ENCODE measurements at regions of chr6 and their contacts with region 1.

Region 1: DNA sequence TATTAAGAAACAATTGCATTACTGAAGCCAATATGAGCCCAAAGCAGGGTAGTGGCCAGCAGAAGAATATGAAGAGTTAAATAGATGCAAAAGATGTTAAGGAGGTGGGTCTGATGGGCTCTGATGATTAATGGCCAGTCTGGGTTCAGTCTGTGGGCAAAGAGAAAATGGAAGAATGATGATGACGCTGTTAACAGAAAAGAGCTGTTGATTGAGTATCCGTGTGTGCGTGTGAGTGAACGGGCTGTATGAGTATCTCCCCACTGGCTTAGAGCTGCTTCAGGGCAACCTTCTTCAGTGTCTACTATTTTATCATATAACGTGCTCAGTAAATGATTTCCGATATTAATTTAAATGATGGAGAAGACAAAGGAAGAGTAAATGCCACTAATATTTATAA is 723.3 kb upstream of the MAP3K7 start:
- DNase-seq: no peak
- ATAC-seq: no peak
- H3K4me3 ChIP-seq: no peak overlapping the region
- H3K27ac ChIP-seq: no peak overlapping the region
- H3K4me1 ChIP-seq: no peaks in the 10 kb centered on the region
- H3K27me3 ChIP-seq: no peaks in the 10 kb centered on the region
- CTCF ChIP-seq: no peak

Region 2: DNA sequence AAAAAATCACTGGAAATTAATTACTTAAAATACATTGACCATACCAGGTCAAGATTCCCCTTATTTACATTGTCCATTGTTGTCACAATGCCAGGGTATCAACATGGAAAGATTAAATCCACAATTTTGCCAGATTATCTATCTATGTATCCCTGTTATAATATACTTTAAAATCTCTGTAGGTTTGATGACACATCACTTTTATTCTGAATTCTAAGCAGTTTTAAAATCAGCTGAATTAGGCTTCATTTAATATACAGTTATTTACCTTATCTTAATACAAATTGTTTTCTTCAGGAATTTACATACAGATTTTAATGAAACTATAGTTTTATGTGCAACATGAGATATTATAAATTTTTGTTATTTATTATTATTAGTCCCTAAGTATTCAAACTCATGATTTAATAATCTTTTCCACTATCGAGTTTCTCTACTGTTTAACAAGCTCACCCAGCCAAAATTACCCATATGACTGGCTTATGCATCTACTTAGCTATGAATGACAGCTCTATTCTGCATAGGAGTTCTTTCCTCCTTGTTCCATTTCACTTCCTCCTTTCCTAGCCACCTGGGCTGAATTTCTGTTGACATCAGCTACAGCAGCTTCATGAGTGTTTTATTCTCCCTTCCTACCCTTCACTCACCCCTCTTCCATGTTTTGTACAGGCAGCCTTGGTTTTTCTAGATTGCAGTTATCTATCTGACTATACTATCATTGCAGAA is 69.1 kb before region 1 on chr6:
- intact Hi-C with region 1: loop called in 1 of 10 experiments (anchors 2 kb)
- DNase-seq: no peak
- ATAC-seq: no peak
- H3K4me3 ChIP-seq: no peak overlapping the region
- H3K27ac ChIP-seq: no peak overlapping the region
- H3K4me1 ChIP-seq: no peaks in the 10 kb centered on the region
- H3K27me3 ChIP-seq: no peaks in the 10 kb centered on the region
- CTCF ChIP-seq: no peak

Region 3: GRCh38 chr6:91268941-91269340 is 41.2 kb before region 1 on chr6:
- intact Hi-C with region 1: no loop called
- DNase-seq: no peak
- ATAC-seq: no peak
- H3K4me3 ChIP-seq: no peak overlapping the region
- H3K27ac ChIP-seq: no peak overlapping the region
- H3K4me1 ChIP-seq: no peaks in the 10 kb centered on the region
- H3K27me3 ChIP-seq: no peaks in the 10 kb centered on the region
- CTCF ChIP-seq: no peak

Region 4: DNA sequence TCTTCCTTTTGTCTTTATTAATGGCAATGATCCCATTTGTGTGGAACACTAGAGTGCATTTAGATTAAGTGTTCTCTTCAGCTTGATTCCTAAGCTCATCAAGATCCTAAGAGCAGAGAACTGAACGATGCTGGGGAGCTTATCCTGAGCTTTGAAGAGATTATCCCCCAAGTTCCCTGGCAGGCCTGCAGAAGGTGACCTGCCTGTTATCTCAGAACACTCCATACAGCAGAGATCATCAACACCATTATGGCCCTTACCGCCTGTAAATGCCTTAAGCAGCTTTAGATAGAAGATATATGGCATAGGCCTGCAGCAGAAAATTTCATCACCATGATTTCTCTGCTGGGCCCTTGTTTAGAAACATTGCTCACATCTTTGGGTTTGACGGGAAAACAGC is 56.6 kb after region 1 on chr6:
- intact Hi-C with region 1: no loop called
- DNase-seq: no peak
- ATAC-seq: no peak
- H3K4me3 ChIP-seq: no peak overlapping the region
- H3K27ac ChIP-seq: no peak overlapping the region
- H3K4me1 ChIP-seq: no peaks in the 10 kb centered on the region
- H3K27me3 ChIP-seq: no peaks in the 10 kb centered on the region
- CTCF ChIP-seq: no peak

Region 5: DNA sequence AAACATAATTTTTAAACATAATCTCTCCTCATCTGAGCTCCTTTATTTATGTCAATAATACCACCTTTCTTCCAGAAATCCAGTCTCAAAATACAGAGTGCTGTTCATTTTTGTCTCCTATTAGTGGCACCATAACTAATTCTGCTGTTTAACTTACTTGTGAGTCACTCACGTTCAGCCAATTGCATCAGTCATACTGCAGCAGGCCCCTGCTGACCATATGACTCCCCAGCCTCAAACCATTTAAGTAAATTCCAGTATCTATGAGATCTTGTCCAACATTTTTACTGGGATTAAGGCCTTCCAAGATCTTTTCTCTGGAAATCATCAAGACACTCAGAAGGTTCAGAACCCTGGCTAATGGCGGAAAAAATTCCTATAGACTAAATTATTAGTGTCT is 258.9 kb after region 1 on chr6:
- intact Hi-C with region 1: no loop called
- DNase-seq: no peak
- ATAC-seq: no peak
- H3K4me3 ChIP-seq: no peak overlapping the region
- H3K27ac ChIP-seq: no peak overlapping the region
- H3K4me1 ChIP-seq: no peaks in the 10 kb centered on the region
- H3K27me3 ChIP-seq: no peaks in the 10 kb centered on the region
- CTCF ChIP-seq: no peak